ENCODE measurements at regions of chrX and their contacts with region 1.

Region 1: DNA sequence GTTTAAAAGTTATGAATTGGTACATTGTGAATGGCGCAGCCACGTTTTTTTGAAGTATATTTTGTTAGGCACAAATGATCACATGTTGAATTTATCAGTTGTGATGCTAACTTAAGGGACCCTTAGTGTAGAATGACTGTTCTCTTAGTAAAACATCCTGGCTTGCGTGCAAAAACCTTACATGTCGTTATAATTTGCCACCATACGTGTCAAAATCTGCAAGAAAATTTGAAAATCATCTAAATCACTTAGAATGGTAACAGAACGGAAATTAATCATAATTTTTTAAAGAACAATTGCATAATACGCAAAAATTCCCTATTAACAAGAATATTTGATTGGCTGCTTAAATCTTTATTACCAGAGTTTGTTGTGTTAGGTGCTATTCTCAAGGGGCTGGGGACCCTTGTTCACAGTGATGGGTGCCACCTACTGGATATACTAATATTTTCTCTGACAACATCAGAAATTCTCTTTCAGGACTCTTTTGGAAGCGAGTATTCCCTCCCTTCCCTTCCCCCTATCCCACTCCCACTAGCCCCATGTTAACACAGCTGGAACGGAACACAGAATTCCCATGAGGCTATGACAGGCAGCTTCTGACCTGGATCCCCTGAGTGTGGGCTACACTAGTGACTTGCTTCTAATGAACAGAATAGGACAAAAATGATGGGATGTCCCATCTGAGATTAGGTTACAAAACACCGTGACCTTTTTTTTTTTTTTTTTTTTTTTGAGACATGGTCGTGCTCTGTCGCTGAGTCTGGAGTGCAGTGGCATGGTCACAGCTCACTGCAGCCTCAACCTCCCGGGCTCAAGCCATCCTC is 71.8 kb downstream of the SUPT20HL2 start:
- DNase-seq: peak; percentile 13
- H3K4me3 Mint-ChIP-seq: no peak overlapping the region
- H3K27ac Mint-ChIP-seq: no peak overlapping the region
- H3K4me1 Mint-ChIP-seq: peaks cover 25% of the 10 kb centered on the region
- H3K27me3 Mint-ChIP-seq: no peaks in the 10 kb centered on the region
- CTCF ChIP-seq: no peak

Region 2: GRCh38 chrX:22882543-22882942 is 1359.5 kb before region 1 on chrX:
- CTCF ChIA-PET with region 1: no interaction called
- intact Hi-C with region 1: no loop called
- DNase-seq: no peak
- H3K4me3 Mint-ChIP-seq: no peak overlapping the region
- H3K27ac Mint-ChIP-seq: no peak overlapping the region
- H3K4me1 Mint-ChIP-seq: no peaks in the 10 kb centered on the region
- H3K27me3 Mint-ChIP-seq: no peaks in the 10 kb centered on the region
- CTCF ChIP-seq: no peak

Region 3: GRCh38 chrX:23919706-23920320 is 322.2 kb before region 1 on chrX:
- CTCF ChIA-PET with region 1: no interaction called
- intact Hi-C with region 1: loop called (anchors 10 kb)
- DNase-seq: peak; percentile 10
- H3K4me3 Mint-ChIP-seq: no peak overlapping the region
- H3K27ac Mint-ChIP-seq: no peak overlapping the region
- H3K4me1 Mint-ChIP-seq: no peaks in the 10 kb centered on the region
- H3K27me3 Mint-ChIP-seq: no peaks in the 10 kb centered on the region
- CTCF ChIP-seq: no peak

Region 4: GRCh38 chrX:24081661-24082264 is 160.3 kb before region 1 on chrX:
- CTCF ChIA-PET with region 1: no interaction called
- intact Hi-C with region 1: loop called (anchors 1 kb)
- DNase-seq: peak; percentile 77
- H3K4me3 Mint-ChIP-seq: no peak overlapping the region
- H3K27ac Mint-ChIP-seq: no peak overlapping the region
- H3K4me1 Mint-ChIP-seq: no peaks in the 10 kb centered on the region
- H3K27me3 Mint-ChIP-seq: no peaks in the 10 kb centered on the region
- CTCF ChIP-seq: no peak

Region 5: DNA sequence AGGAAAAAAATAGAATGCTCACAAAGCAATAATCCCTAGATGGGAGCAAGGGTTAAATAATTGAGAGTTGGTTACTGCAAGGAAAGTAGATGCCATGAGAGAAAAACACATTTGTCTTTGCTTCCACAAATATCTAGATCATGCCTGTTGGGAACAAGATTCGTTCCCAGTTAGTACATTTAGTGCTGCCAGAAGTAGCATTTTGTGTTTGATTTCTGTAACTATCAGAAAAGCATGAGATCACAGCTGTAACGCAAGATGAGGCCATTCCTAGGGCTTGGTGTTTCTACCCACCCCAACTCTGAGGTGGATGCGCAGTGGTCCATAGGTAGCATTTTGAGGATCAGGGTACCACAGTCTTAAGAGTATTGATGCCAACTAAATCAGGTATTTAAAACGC is 202.6 kb after region 1 on chrX:
- CTCF ChIA-PET with region 1: no interaction called
- intact Hi-C with region 1: no loop called
- DNase-seq: no peak
- H3K4me3 Mint-ChIP-seq: no peak overlapping the region
- H3K27ac Mint-ChIP-seq: no peak overlapping the region
- H3K4me1 Mint-ChIP-seq: no peaks in the 10 kb centered on the region
- H3K27me3 Mint-ChIP-seq: peaks cover 2% of the 10 kb centered on the region
- CTCF ChIP-seq: no peak

Measured in Calu3 (cell line).